Activated CD4-positive, alpha-beta T cell treated with anti-CD3 and anti-CD28 coated beads, Interleukin-2, amount 10 ng/mL, durations not matched to agents 24 days and 14 days (primary cell): ENCODE measurements at regions of chr10 and their contacts with region 1.

Region 1: GRCh38 chr10:117320050-117320665 is 55.1 kb downstream of the PDZD8 start:
- DNase-seq: peak; percentile 61
- H3K4me3 Mint-ChIP-seq: no peak overlapping the region
- H3K27ac Mint-ChIP-seq: no peak overlapping the region
- H3K4me1 Mint-ChIP-seq: no peaks in the 10 kb centered on the region
- H3K27me3 Mint-ChIP-seq: no peaks in the 10 kb centered on the region

Region 2: GRCh38 chr10:117216611-117217195 is 103.5 kb before region 1 on chr10:
- intact Hi-C with region 1: loop called (anchors 1 kb)
- DNase-seq: peak; percentile 93
- H3K4me3 Mint-ChIP-seq: peak overlapping the region; percentile 83
- H3K27ac Mint-ChIP-seq: no peak overlapping the region
- H3K4me1 Mint-ChIP-seq: peaks cover 7% of the 10 kb centered on the region
- H3K27me3 Mint-ChIP-seq: peaks cover 24% of the 10 kb centered on the region